ENCODE measurements at regions of chr16 and their contacts with region 1.

Region 1: DNA sequence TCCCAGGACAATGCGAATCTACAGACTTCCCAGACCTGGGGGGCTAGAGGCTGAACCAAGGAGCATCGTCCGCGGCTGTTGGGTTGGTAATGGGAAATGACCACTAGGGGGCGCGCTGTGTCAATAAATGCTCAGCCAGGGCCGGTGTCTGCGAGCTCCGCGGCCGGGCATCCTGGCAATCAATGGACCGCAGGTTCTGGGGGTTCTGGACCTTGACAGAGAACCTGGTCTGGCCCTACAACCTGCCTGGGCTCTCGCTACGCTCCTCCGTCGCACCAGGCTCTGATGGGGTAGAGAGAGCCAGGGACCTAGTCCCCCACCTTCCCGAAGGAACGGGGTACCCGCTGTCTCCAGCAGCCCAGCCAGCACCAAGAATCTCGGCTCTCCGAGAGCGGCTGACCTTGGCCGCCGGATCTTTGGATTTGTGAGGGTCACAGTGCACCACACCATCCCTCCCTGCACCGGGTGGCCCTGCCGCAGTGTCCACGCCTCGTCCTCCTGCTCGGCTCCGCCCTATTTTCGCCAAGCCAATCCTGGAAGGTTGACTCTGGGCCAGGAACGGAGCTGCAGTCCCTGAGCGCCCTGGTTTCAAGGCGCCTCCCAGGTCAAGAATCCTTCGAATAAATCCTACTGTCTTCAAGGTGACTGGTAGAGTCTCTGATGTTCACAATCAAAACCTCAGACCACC is 20.4 kb upstream of the BEAN1 start:
- DNase-seq: peak; percentile 74
- H3K4me3 Mint-ChIP-seq: peak overlapping the region; percentile 72
- H3K27ac Mint-ChIP-seq: peak overlapping the region; percentile 37
- H3K4me1 Mint-ChIP-seq: peaks cover 24% of the 10 kb centered on the region
- H3K27me3 Mint-ChIP-seq: no peaks in the 10 kb centered on the region
- CTCF ChIP-seq: peak; percentile 83

Region 2: GRCh38 chr16:66357153-66357928 is 49.3 kb before region 1 on chr16:
- CTCF ChIA-PET with region 1: interaction called, 10 read pairs
- POLR2A ChIA-PET with region 1: interaction called, 3 read pairs
- intact Hi-C with region 1: loop called (anchors 5 kb)
- DNase-seq: peak; percentile 77
- H3K4me3 Mint-ChIP-seq: no peak overlapping the region
- H3K27ac Mint-ChIP-seq: no peak overlapping the region
- H3K4me1 Mint-ChIP-seq: peaks cover 17% of the 10 kb centered on the region
- H3K27me3 Mint-ChIP-seq: peaks cover 59% of the 10 kb centered on the region
- CTCF ChIP-seq: peak; percentile 56

Region 3: DNA sequence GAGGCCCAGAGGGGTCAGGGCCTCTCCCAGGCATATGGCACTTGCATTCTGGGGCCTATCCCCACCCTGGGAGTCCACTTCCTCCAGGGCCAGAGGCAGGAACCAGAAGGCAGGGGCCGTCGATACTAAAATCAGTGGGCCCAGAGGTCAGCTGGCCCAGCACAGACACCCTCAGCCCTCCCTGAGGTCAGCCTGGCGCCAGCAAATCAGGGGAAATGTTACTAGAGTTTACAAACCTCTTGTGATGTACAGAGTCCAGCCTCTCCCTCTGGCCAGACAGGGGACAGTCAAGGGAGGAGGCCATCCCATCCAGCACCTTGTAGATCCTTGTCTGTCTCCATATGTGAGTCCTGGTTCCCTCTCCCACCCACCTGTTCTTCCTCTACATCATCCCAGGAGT is 29.4 kb before region 1 on chr16:
- CTCF ChIA-PET with region 1: no interaction called
- POLR2A ChIA-PET with region 1: no interaction called
- intact Hi-C with region 1: no loop called
- DNase-seq: no peak
- H3K4me3 Mint-ChIP-seq: no peak overlapping the region
- H3K27ac Mint-ChIP-seq: no peak overlapping the region
- H3K4me1 Mint-ChIP-seq: peaks cover 3% of the 10 kb centered on the region
- H3K27me3 Mint-ChIP-seq: no peaks in the 10 kb centered on the region
- CTCF ChIP-seq: no peak

Region 4: DNA sequence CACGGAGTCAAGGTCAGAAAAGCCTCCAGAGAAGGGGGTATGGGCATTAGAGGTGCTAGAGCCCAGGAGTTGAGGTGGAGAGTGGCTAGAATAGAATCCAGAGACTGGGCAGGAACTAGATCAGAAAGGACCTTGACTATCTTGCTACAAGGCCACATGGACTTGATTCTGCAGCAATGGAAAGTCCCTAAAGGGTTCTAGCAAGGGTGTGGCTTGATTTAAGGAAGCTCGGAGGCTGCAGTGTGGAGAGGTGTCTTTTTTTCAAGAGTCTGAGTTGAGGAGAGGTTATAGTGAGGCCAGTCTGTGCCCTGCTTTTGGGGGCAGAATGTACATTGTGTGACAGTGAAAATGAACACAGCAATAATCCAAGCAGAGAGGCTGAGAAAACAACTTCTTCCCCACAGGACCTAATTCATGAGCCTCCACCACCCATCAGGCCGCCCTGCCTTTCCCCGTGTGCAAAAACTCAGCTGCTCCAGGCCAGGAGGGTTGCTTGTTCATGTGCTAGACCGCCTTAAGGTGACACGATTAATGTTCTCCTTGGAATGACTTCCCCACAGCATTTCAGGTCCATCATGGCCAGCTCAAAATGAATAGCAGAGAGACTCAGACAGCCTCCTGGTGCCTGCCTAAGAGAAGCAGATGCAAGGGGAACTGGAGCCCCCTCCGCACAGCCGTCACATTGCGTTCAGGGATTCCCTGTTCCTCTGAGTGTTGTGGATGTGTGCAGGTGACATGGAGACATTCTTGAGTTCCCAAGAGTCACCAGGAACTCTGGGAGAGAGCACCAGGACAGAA is 11.7 kb after region 1 on chr16:
- CTCF ChIA-PET with region 1: interaction called, 5 read pairs
- POLR2A ChIA-PET with region 1: interaction called, 10 read pairs
- intact Hi-C with region 1: loop called (anchors 1 kb)
- DNase-seq: no peak
- H3K4me3 Mint-ChIP-seq: no peak overlapping the region
- H3K27ac Mint-ChIP-seq: no peak overlapping the region
- H3K4me1 Mint-ChIP-seq: peaks cover 15% of the 10 kb centered on the region
- H3K27me3 Mint-ChIP-seq: no peaks in the 10 kb centered on the region
- CTCF ChIP-seq: no peak

Region 5: GRCh38 chr16:66474750-66475199 is 68.1 kb after region 1 on chr16:
- CTCF ChIA-PET with region 1: interaction called, 189 read pairs
- POLR2A ChIA-PET with region 1: interaction called, 14 read pairs
- intact Hi-C with region 1: loop called (anchors 1 kb)
- DNase-seq: no peak
- H3K4me3 Mint-ChIP-seq: no peak overlapping the region
- H3K27ac Mint-ChIP-seq: no peak overlapping the region
- H3K4me1 Mint-ChIP-seq: peaks cover 13% of the 10 kb centered on the region
- H3K27me3 Mint-ChIP-seq: no peaks in the 10 kb centered on the region
- CTCF ChIP-seq: no peak

Region 6: GRCh38 chr16:66502020-66502913 is 95.6 kb after region 1 on chr16:
- CTCF ChIA-PET with region 1: interaction called, 7 read pairs
- POLR2A ChIA-PET with region 1: interaction called, 28 read pairs
- intact Hi-C with region 1: no loop called
- DNase-seq: peak; percentile 85
- H3K4me3 Mint-ChIP-seq: no peak overlapping the region
- H3K27ac Mint-ChIP-seq: peak overlapping the region; percentile 31
- H3K4me1 Mint-ChIP-seq: peaks cover 39% of the 10 kb centered on the region
- H3K27me3 Mint-ChIP-seq: no peaks in the 10 kb centered on the region
- CTCF ChIP-seq: no peak

Region 7: DNA sequence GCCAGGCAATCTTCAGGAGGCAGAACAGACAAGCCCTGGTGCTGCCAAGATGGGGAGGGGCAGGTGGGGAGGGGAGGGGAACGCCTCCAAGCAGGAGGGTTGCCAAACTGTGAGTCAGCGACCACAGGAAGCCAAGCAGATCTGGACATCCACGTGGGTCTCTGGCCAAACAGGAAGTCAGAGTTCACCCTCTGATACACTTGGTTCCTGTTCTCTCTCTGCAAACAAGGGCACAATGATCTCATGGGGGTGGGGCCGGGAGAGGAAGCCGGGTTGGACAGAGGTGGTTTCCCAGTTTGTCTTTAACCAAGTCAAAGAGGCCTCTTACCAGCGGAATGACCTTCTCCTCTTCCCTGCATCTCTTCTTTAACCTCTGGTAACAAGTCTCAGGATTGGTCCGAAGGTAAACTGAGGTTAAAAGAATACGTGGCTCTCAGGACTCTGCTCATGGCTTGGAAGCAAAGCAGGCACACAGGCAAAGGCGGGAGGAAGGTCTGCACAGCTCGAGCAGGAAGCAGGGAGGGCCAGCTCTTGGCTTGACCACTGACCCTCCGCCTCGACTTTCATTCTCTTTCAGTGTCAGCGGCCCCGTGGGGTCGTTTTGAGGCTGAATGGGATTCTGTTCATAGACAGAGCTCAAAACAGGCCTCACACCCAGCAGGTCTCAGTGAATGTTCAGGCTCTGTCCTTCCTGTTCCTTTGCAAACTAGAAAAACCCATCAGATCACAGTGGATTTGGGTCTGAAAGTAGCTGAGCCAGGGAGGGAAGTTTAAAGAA is 110.3 kb after region 1 on chr16:
- CTCF ChIA-PET with region 1: interaction called, 11 read pairs
- POLR2A ChIA-PET with region 1: interaction called, 16 read pairs
- intact Hi-C with region 1: loop called (anchors 2 kb)
- DNase-seq: peak; percentile 99
- H3K4me3 Mint-ChIP-seq: peak overlapping the region; percentile 67
- H3K27ac Mint-ChIP-seq: peak overlapping the region; percentile 98
- H3K4me1 Mint-ChIP-seq: peaks cover 47% of the 10 kb centered on the region
- H3K27me3 Mint-ChIP-seq: no peaks in the 10 kb centered on the region
- CTCF ChIP-seq: no peak

Region 8: DNA sequence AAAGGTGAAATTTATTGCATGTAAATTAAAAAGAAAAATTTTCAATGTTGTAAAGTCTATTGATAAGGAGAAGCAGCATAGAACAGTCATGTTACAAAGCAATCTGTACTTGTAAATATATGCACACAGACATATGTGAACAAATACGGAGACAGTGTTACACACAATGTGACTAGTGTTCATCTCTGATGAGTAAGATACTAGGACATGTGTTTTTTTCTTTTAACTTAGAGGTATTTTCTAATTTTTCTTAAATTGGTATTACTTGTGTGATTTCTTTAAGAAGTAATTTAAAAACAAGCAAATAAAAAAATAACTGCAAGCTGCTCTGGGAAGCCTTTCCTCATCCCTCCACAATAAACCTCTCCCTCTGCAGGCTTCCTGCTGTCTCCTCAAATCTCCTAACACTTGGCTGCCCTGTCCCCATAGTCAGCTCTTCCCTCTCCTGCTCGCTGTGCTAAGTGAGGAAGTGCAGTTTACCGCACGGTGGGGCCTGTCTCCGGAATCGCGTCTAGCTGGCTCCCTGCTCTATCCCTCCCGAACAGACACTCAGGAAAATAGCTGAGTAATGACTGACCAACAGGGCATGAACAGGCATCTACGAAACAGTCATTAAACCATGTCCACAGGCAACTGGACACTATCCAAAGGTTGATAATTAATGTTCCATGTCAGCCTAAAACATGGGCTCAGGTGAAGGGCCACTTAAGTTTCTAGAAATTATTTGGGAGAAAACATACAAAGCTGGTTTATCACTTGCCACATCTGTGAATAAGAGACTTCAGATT is 253.9 kb after region 1 on chr16:
- CTCF ChIA-PET with region 1: interaction called, 25 read pairs
- POLR2A ChIA-PET with region 1: interaction called, 5 read pairs
- intact Hi-C with region 1: no loop called
- DNase-seq: peak; percentile 74
- H3K4me3 Mint-ChIP-seq: peak overlapping the region; percentile 34
- H3K27ac Mint-ChIP-seq: peak overlapping the region; percentile 78
- H3K4me1 Mint-ChIP-seq: peaks cover 25% of the 10 kb centered on the region
- H3K27me3 Mint-ChIP-seq: no peaks in the 10 kb centered on the region
- CTCF ChIP-seq: no peak